Activated T-helper 2 cell treated with anti-CD3 and anti-CD28 coated beads, Interferon-gamma antibody, Interleukin-2, Interleukin-4, amounts not matched to agents 10 μg/mL and 5 μg/mL and 100 μg/mL, durations not matched to agents 14 hours and 24 hours and 36 hours (primary cell): ENCODE measurements at regions of chr3 and their contacts with region 1.

Region 1: GRCh38 chr3:86969500-86970189 is 21.3 kb downstream of the VGLL3 start:
- DNase-seq: no peak
- H3K4me3 Mint-ChIP-seq: no peak overlapping the region
- H3K27ac Mint-ChIP-seq: no peak overlapping the region
- H3K4me1 Mint-ChIP-seq: no peaks in the 10 kb centered on the region
- H3K27me3 Mint-ChIP-seq: no peaks in the 10 kb centered on the region

Region 2: GRCh38 chr3:86990734-86991481 is 21.3 kb after region 1 on chr3 and contains the start of gene VGLL3:
- intact Hi-C with region 1: no loop called
- DNase-seq: no peak
- H3K4me3 Mint-ChIP-seq: peak within 1 kb of the TSS; percentile 15
- H3K27ac Mint-ChIP-seq: no peak within 1 kb of the TSS
- H3K4me1 Mint-ChIP-seq: peaks cover 6% of the 10 kb centered on the region
- H3K27me3 Mint-ChIP-seq: peaks cover 38% of the 10 kb centered on the region
- total RNA-seq, gene VGLL3: not detected in 2 replicates

Region 3: DNA sequence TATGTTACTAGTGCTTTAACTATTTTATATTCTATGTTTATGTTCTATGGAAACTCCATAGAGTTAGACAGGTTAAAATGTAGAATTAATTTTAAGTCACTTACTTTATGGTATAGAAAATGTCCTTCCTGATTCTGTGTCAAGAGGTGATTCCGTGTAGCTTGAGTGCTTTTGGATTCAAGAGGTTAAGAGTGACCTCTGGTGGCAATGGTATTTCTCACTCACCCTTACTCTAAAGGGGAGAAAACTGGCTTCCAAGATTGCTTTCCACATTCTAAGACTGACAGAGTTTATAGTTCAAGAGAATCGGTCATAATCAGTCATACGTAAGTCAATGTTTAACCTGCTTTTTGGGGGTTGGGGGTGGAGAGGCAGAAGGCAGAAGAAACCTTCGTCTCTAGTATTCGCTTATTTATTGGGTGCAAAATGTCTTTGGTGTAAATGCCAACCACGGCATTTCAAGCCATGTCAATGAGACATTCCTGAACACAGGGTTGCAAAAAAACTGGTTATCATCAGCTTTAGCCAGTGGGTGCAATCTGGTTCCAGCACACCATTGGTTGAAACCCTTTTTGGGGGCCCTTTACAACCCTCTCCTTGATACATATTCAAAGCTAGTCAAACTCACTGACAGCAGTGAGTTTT is 113.3 kb after region 1 on chr3:
- intact Hi-C with region 1: loop called (anchors 2 kb)
- DNase-seq: no peak
- H3K4me3 Mint-ChIP-seq: no peak overlapping the region
- H3K27ac Mint-ChIP-seq: no peak overlapping the region
- H3K4me1 Mint-ChIP-seq: peaks cover 12% of the 10 kb centered on the region
- H3K27me3 Mint-ChIP-seq: peaks cover 2% of the 10 kb centered on the region

Region 4: DNA sequence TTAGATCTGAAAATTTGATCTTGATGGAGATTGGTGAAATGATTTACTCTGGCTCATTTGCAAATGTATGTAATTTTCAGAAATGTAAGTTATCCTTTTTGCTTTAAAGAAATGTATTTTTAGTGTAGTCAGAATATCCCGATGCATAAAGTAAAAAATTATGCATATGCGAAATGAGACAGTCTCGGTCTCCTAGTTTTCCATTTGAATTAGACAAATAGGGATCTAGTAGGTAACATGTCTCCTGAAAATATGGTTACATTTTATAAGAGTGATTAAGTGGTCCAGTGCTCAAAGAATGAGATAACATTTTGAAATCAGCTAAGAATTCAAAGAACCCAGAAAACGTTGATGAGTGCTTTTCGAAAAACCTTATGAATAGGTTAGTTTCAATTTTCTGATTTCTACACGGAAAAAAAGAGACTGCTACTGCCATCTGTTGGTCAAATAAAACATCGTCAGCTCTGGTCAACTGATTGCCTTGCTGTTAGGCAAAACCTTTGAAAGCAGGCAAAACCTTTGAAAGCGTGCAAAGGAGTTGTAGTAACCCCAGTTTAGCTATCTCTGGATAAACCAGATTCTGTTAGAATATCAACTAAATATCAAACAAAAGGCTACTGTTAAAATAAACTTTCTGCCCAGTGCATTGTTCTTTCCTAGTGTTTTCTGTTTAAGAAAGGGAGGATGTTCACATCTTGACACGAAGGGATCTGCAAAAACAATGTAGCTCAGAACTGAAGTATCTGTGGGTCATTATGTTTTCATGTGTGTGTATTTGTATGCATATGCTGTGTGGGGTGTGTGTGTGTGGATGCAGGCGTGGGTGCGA is 198.2 kb after region 1 on chr3:
- intact Hi-C with region 1: loop called (anchors 1 kb)
- DNase-seq: no peak
- H3K4me3 Mint-ChIP-seq: peak overlapping the region; percentile 2
- H3K27ac Mint-ChIP-seq: no peak overlapping the region
- H3K4me1 Mint-ChIP-seq: peaks cover 3% of the 10 kb centered on the region
- H3K27me3 Mint-ChIP-seq: peaks cover 10% of the 10 kb centered on the region